ENCODE measurements at regions of chr2 and their contacts with region 1.

Region 1: DNA sequence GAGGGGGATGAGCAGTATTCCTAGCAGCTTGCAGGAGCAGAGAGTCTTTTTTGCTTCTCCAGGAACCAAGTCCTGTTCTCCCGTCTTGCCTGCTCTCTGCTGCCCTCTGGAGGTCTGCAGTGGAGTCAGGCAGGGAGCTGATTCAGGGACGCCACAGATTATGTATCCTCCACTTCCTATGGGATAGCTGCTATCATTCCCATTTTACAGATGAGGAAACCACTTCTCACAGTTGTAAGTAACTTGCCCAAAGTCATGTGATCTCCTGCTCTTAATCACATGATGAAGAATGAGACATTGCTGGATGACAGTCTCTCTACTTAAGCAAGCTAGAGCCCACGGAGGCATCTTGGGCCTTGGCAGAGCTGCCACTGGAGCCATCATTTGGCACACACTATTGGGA is 8.3 kb downstream of the SLC4A5 start:
- DNase-seq: peak; percentile 65
- CTCF ChIP-seq: peak; percentile 99

Region 2: GRCh38 chr2:73828818-73829570 is 505.9 kb before region 1 on chr2 and contains the start of gene STAMBP:
- CTCF ChIA-PET with region 1: interaction called, 57 read pairs
- POLR2A ChIA-PET with region 1: no interaction called
- DNase-seq: peak; percentile 94
- CTCF ChIP-seq: no peak

Region 3: DNA sequence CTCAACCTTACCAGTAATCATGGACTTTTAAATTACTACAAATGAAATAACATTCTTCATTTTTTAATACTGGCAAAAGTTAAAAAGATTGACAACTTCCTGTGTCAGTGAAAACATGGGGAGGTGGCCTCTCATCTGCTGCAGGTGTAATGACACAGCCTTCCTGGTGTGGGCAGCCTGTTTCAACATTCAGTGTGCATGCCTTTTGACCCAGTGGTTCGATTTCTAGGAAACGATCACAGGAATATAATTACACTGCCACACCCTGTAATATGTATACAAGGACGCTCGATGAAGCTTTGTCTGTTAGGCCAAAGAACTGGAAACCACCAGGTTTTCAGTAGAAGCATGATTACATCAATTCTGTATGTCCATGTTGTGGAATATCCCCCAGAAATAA is 67.9 kb before region 1 on chr2:
- CTCF ChIA-PET with region 1: interaction called, 11 read pairs
- POLR2A ChIA-PET with region 1: no interaction called
- DNase-seq: peak; percentile 70
- CTCF ChIP-seq: peak; percentile 28

Region 4: GRCh38 chr2:74304332-74305148 is 30.4 kb before region 1 on chr2:
- CTCF ChIA-PET with region 1: interaction called, 30 read pairs
- POLR2A ChIA-PET with region 1: no interaction called
- DNase-seq: peak; percentile 30
- CTCF ChIP-seq: no peak

Region 5: DNA sequence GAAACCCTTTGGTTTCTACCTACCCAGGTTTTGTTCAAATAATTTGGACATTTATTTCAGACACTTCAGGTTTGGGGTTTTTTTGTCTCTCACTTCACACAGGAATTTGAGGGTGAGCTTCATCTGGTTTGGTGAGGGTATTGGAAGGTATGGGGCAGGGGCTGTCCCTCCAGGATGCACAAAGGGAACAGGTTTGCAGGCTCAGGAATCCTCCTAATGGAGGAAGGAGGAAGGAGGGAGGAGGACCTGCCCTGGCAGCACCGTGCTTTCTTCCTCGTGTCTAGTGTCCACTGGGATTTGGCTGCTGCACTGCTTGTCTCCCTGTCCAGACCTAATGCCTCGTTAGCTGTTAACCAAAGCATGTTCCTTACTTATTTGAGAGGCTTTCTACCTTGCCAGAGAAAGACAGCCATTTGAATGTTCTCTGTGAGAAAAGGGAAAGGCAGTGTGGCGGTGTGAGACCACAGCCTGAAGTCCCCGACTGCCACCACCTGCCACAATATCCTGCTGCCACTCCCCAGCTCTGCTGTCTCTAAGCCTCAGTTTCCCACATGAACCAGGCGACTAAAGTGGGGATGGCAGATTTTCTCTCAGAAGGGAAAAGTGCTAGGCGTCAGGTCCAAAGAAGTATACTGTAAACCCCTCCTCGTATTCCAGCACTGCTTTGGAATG is 10.5 kb after region 1 on chr2:
- CTCF ChIA-PET with region 1: interaction called, 57 read pairs
- POLR2A ChIA-PET with region 1: no interaction called
- DNase-seq: no peak
- CTCF ChIP-seq: no peak

Region 6: GRCh38 chr2:74391580-74392448 is 56.9 kb after region 1 on chr2:
- CTCF ChIA-PET with region 1: interaction called, 32 read pairs
- POLR2A ChIA-PET with region 1: no interaction called
- DNase-seq: peak; percentile 94
- CTCF ChIP-seq: peak; percentile 95

Region 7: DNA sequence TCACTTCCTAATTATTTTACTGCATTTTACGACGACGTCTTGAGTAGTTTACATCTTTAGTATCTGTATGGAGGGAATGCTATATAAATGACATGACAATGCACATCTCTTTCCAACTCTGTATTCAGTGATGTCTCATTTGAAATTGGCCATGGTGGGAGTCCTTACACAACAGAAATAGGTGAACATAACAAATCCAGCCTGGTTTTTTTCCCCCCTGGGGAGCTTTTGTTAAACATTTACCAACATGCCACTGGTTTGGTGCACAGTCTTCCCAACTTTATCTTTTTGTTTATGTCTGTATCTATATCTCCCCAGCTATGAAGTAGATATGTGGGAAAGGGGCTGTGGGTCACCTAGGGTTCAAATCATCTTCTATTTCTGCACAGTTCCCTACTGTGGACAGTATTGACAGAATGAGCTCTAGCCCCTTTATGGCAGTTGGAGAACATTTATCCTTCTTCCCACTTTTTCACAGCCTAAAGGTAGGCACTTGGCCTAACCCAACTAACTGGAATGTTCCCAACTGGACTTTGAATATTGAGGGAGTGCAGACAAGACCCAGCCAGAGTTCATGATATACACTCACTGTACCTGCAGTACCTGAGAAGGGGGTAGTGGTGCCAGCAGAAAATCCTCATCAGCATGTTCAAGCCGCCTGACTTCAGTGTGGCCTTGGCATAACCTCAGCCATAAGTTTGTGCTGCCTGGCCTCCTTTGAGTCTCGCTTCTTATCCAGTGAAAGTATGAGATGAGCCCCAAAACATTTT is 112.5 kb after region 1 on chr2:
- CTCF ChIA-PET with region 1: no interaction called
- POLR2A ChIA-PET with region 1: no interaction called
- DNase-seq: no peak
- CTCF ChIP-seq: no peak

Measured in GM10248 (cell line).